HAP-1 (cell line): ENCODE measurements at regions of chr15 and their contacts with region 1.

Region 1: GRCh38 chr15:38699633-38700230 is 135.1 kb upstream of the RASGRP1 start:
- DNase-seq: peak; percentile 50 to 75
- H3K4me3 ChIP-seq: no peak overlapping the region
- H3K4me1 ChIP-seq: no peaks in the 10 kb centered on the region
- H3K27me3 ChIP-seq: no peaks in the 10 kb centered on the region

Region 2: DNA sequence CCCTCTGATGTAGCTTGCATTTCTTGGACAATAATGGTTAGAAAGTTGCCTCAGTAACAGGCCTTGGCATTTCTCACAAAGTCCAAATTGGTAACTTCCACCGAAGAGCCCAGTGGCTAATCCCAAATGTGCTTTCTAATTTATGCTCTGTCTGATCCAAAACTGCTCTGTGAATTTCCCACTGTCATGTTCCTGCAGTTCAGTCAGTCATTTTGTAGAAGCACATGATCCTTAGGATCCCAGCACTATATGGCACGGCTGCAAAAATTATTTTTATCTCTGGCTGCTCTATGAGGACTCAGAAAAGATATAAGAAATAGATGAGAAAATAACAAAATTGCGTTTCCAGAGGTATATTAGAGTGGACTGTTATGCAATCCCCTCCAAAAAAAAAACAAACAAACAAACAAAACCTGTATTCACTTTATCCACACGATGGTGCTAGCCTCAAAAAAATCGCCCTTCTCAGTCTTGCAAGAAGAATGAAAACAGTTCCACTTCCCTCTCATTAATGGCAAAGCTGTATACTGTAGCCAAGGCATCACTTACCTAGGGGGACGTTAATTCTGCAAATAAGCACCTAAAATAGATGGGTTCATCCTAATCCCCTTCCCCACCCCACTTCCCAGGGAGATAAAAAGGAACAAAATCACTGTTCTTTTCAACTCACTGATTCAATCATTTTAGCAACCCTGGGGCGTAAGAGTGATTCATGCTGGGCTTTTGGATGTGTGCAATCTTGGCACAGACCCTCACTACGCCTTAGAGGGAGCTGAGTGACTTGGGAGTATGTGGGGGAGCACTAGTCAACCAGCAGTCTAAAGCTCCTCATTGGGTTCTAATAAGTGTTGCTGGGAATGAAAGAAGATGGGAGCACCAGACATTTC is 704.0 kb before region 1 on chr15:
- in situ Hi-C with region 1: loop called (anchors 25 kb)
- DNase-seq: peak; percentile 52 to 65
- H3K4me3 ChIP-seq: no peak overlapping the region
- H3K4me1 ChIP-seq: no peaks in the 10 kb centered on the region
- H3K27me3 ChIP-seq: peaks cover 2% of the 10 kb centered on the region

Region 3: DNA sequence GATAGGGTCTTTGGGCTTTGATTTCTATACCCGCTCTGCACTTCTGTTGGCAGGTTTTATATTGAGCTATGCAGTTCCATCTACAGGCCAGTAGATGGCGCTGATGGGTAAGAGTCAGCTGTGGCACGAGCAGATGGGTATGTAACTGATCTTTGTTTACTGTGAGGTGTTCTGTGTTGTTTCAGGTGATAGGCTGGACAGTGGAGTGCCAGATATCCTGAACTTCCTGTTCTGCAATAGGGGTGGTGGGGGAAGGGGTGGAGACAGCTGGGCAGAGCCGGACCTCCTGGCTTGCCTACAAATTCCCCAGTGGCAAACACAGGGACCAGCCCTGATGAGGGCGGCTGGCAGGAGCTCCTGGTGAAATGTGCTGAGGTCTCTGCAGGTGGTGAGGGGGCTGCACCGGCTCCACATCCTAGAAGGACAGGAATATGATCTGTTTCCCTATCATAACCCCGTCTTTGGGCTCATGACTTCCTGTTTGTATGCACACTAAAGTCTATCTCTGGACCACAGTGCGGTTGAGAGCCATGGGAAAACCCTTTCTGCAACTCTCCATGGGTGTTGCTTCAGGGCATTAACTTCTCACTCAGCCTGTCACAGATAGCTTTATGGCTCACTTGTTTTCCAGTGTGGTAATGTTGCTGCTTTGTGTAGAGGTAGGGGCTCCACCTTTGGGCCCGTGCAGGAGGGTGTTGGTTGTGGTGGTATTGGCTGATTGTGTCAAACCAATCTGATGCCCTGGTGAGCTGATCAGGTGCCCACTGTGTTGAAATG is 259.2 kb before region 1 on chr15:
- in situ Hi-C with region 1: loop called (anchors 10 kb)
- DNase-seq: peak; percentile 48 to 54
- H3K4me3 ChIP-seq: no peak overlapping the region
- H3K4me1 ChIP-seq: no peaks in the 10 kb centered on the region; the same call in 1 of the 2 replicates
- H3K27me3 ChIP-seq: peaks cover 10% of the 10 kb centered on the region

Region 4: GRCh38 chr15:38602901-38603670 is 96.6 kb before region 1 on chr15:
- in situ Hi-C with region 1: no loop called
- DNase-seq: no peak
- H3K4me3 ChIP-seq: no peak overlapping the region
- H3K4me1 ChIP-seq: no peaks in the 10 kb centered on the region
- H3K27me3 ChIP-seq: peaks cover 2% of the 10 kb centered on the region; the same call in 1 of the 2 replicates

Region 5: DNA sequence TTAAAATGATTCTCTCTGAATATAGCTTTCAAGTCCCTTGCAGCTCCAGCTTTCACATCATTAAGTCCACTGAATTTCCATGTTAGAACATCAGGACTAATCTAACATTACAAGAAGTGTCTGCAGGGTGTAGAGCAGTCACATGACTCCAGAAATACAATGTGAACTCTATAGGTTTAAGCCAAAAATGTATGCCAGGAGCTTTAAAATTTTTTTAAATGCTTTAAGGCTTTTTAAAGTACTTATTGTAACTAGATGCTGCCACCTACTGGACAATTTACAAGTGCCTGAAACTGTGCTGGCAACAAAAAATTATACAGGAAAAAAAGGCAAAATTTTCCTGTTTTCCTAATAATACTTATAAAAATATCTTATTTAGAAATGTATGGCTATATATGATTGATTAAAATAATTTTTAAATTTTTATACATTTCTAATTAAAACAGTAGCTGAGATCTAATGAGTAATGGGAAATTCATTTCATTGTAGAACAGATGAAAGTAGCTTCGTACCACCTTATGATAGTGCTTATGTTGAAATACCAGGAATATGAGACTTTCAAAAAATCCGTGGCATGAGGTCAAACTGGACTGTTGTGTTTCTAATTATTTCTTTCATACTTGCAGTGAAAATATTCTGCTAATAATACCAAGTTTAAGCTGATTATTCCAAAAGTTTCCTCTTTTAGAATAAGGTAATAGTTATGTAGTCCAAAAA is 1057.2 kb after region 1 on chr15:
- in situ Hi-C with region 1: loop called (anchors 25 kb)
- DNase-seq: peak; percentile 59 to 69
- H3K4me3 ChIP-seq: no peak overlapping the region
- H3K4me1 ChIP-seq: no peaks in the 10 kb centered on the region
- H3K27me3 ChIP-seq: no peaks in the 10 kb centered on the region